AG04450 (cell line): ENCODE measurements at regions of chr12 and their contacts with region 1.

Region 1: GRCh38 chr12:39990122-39991101 is 115.5 kb downstream of the SLC2A13 start:
- DNase-seq: peak; percentile 2
- H3K4me3 ChIP-seq: no peak overlapping the region
- H3K27ac ChIP-seq: no peak overlapping the region
- H3K27me3 ChIP-seq: no peaks in the 10 kb centered on the region
- CTCF ChIP-seq: peak; percentile 85

Region 2: GRCh38 chr12:39764944-39765560 is 225.4 kb before region 1 on chr12:
- CTCF ChIA-PET with region 1: interaction called, 54 read pairs
- POLR2A ChIA-PET with region 1: no interaction called
- DNase-seq: peak; percentile 7
- H3K4me3 ChIP-seq: no peak overlapping the region
- H3K27ac ChIP-seq: no peak overlapping the region
- H3K27me3 ChIP-seq: no peaks in the 10 kb centered on the region
- CTCF ChIP-seq: peak; percentile 75

Region 3: DNA sequence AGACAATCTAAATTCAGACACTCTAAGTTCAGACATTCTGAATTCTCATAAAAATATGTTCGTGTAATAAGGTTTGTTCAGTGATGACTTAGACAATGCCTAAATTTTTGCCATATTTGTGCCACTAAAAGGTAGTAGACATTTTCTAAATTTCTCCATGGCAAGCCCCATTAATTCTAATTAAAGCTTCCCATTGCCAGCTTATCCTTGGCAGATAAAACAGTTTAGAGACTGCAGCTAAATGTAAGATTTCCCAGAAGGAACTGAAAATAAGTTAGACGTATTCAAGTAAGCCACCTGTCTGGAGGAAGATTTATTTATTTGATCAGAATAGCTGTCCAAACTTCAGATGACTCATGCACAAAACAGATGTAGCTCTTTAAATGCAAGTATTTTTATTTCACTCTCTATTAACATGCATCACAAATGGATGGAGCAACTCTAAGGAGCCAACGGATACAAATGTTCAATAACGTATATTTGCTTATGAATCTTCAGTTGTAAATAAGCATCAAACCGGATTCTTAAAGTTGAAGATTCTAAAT is 15.0 kb before region 1 on chr12:
- CTCF ChIA-PET with region 1: interaction called, 16 read pairs
- POLR2A ChIA-PET with region 1: no interaction called
- DNase-seq: no peak
- H3K4me3 ChIP-seq: no peak overlapping the region
- H3K27ac ChIP-seq: no peak overlapping the region
- H3K27me3 ChIP-seq: no peaks in the 10 kb centered on the region
- CTCF ChIP-seq: no peak